ENCODE measurements at regions of chr6 and their contacts with region 1.

Region 1: DNA sequence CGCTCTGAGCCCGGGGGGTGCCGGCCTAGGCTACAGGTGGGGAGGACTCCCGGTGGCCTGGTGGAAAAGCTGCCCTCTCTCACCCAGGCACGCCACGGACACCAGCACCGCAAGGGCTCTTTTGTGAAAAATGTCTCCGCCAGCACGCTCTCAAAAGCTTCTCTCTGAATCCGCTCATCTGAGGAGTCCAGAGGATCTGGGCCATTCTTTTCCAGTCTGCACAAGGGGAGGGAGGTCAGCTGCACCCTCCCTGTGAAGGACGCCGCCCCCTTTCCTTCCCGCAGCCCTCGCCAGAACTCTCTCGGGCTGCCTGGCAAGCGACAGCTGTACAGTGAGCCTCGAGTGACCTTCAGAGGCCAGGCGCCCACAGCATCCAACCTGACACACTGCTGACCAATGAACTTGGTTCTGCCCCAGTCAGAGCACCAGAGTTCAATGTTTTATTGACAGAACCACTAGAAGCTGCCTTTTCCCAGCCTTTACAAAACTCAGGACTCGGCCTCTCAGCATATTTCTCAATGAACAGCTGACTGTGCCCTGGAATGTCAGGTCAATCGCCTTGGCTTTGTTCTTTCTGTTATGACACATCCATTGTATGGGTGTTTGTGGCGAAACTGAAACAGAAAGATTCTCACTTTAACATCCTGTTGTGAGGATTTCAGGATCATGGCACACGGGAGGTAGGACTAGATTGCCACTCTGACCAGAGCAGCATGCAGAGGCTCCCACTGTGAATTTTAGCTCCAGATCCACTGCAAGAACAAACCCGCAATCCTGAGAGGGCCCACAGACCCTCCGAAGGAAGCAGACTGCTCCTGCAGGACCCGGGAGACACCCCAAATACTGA is 26.7 kb downstream of the SERPINB9 start:
- DNase-seq: peak; percentile 50
- ATAC-seq: peak; percentile 29
- H3K4me3 Mint-ChIP-seq: peak overlapping the region; percentile 69
- H3K27ac Mint-ChIP-seq: peak overlapping the region; percentile 91
- H3K4me1 Mint-ChIP-seq: peaks cover 81% of the 10 kb centered on the region
- H3K27me3 Mint-ChIP-seq: no peaks in the 10 kb centered on the region
- CTCF ChIP-seq: no peak

Region 2: GRCh38 chr6:2839195-2839981 is 37.0 kb before region 1 on chr6:
- CTCF ChIA-PET with region 1: no interaction called
- POLR2A ChIA-PET with region 1: no interaction called
- intact Hi-C with region 1: no loop called
- DNase-seq: no peak
- ATAC-seq: no peak
- H3K4me3 Mint-ChIP-seq: peak overlapping the region; percentile 85
- H3K27ac Mint-ChIP-seq: no peak overlapping the region
- H3K4me1 Mint-ChIP-seq: peaks cover 63% of the 10 kb centered on the region
- H3K27me3 Mint-ChIP-seq: no peaks in the 10 kb centered on the region
- CTCF ChIP-seq: no peak

Region 3: DNA sequence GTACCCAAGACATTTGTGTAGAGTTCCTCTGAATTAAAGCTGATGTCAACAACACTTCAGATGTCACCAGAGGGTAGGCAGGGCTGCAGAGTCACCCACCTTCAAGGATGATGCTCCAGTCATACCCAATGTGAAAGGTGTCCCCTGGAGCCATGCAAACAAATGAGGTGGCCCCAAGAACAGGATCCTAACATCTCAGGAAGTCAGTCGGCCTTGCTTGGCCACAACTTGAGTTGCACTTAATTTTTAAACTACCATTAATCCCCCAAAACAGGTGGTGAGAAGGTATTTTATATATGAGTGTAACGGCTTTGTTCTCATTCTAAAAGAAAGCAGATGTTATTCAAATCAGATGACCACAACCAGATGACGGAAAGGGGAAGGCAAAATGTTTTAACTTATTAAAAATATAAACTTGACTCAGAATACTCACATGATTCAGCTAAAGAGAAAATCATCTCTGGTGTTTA is 13.7 kb before region 1 on chr6:
- CTCF ChIA-PET with region 1: interaction called, 21 read pairs
- POLR2A ChIA-PET with region 1: interaction called, 8 read pairs
- intact Hi-C with region 1: no loop called
- DNase-seq: peak; percentile 67
- ATAC-seq: peak; percentile 28
- H3K4me3 Mint-ChIP-seq: no peak overlapping the region
- H3K27ac Mint-ChIP-seq: peak overlapping the region; percentile 88
- H3K4me1 Mint-ChIP-seq: peaks cover 83% of the 10 kb centered on the region
- H3K27me3 Mint-ChIP-seq: no peaks in the 10 kb centered on the region
- CTCF ChIP-seq: no peak

Region 4: DNA sequence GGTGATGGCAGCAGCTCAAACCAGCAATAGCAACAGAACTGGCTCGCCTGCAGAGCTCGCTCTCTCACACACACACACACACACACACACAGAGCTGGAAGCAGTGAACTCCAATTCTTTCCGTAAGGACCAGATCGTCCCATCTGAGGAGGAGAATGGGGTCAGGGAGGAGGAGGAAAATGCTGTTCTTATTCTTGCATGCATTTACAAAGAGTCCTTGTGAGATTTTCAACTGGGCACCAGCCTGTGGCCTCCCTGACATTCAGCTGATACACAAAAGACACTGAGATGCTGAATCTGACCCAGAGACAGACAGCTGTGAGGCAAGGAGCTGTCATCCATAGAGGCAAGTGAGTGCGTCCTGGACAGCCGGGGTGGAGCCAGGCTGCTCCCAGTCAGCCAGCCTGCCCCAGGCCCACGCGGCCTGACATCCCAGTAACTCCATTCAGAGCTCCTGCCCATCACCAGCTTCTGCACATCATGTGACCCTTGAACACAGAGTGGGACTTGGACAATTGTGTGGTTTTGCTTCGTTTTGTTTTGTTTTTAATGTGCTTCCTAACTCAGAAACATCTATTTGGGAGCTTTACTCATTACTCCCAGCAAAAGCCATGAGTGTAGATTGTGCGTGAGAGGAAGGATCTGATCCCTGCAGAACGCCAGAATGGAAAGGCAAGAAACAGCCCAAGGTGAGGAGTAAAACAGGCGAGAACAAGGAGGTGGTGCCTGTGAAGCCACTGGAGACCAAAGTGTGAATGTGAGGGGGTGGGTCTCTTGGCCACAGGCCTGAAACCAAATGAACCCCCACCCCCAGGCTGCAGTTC is 24.6 kb after region 1 on chr6:
- CTCF ChIA-PET with region 1: interaction called, 10 read pairs
- POLR2A ChIA-PET with region 1: interaction called, 23 read pairs
- intact Hi-C with region 1: no loop called
- DNase-seq: peak; percentile 22
- ATAC-seq: peak; percentile 7
- H3K4me3 Mint-ChIP-seq: peak overlapping the region; percentile 98
- H3K27ac Mint-ChIP-seq: peak overlapping the region; percentile 80
- H3K4me1 Mint-ChIP-seq: peaks cover 47% of the 10 kb centered on the region
- H3K27me3 Mint-ChIP-seq: no peaks in the 10 kb centered on the region
- CTCF ChIP-seq: no peak

Region 5: DNA sequence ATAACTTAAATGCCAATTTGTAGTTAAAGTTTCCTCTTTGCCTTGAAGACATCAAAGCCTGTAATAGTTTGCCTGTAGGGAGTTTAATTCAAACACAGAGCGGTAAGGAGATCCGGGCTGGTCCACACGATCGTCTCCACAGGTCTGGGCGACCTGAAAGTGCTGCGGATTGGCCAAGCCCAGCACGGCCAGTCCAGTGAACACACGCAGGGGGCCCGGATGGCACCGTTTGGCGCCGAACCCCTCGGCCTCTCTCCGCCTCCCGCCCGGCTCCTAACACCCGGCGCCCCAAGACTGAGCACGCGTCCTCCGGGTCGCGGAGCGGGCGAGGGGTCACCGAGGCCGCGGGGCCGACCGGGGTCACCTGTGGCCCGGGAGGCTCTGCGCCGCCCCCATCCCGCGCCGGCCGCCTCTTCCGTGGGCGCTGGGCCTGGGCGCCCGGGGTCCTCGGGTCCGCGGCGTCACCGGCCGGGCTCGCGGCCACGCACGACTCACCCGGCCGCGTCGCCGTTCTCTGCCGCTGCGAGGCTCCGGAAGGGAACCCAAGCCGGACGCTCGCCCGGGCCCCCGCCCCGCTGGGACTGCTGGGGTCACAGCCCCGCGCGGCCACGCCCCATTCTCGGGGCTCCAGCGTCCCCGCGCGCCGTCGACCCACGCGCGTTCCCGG is 94.5 kb after region 1 on chr6:
- CTCF ChIA-PET with region 1: no interaction called
- POLR2A ChIA-PET with region 1: no interaction called
- intact Hi-C with region 1: no loop called
- DNase-seq: peak; percentile 69
- ATAC-seq: peak; percentile 79
- H3K4me3 Mint-ChIP-seq: peak overlapping the region; percentile 83
- H3K27ac Mint-ChIP-seq: peak overlapping the region; percentile 89
- H3K4me1 Mint-ChIP-seq: peaks cover 50% of the 10 kb centered on the region
- H3K27me3 Mint-ChIP-seq: no peaks in the 10 kb centered on the region
- CTCF ChIP-seq: no peak